ENCODE measurements at regions of chr10 and their contacts with region 1.

Region 1: DNA sequence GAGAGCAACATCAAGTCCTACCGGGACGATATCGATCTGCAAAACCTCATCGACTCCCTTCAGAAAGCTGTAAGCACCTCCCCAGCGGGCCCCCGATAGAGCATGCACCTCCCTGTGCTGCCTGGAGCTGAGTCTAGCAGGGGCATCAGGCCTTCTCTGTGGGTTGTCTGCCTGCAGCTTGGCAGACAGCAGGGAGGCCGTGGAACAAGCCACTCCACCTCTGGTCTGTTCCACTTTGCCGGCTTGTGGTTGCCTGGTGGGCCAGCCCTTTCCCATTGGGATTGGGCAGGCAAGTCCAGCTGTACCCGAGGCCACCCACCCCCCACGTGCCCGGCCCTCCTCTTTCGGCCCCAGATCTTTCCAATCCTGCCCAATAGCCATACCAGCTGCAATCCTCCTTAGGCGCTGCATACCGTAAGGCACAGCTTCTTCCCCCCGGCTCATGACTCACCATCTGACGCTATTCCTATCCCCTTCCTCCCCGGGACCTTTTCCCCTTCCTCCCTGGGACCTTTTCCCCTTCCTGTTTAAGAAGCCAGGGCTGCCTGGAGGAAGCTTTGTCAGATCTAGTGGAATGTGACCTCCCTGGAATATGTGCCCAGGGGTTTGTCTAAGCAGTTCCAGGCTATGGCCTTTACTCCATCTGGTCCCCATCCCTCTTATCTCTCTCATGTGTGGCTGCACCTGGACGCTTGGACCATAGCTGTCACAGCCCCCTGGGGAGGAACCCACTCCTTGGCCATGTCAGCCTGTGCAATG is 28.1 kb upstream of the SH2D4B start:
- DNase-seq: no peak
- H3K4me3 ChIP-seq: no peak overlapping the region
- H3K27ac ChIP-seq: peak overlapping the region in 1 of 4 donors; percentile 11
- H3K4me1 ChIP-seq: peaks cover 12 to 17% (median 14%) of the 10 kb centered on the region in 4 donors
- H3K27me3 ChIP-seq: no peaks in the 10 kb centered on the region
- CTCF ChIP-seq: no peak
- EP300 ChIP-seq: no peak
- POLR2A ChIP-seq: no peak

Region 2: DNA sequence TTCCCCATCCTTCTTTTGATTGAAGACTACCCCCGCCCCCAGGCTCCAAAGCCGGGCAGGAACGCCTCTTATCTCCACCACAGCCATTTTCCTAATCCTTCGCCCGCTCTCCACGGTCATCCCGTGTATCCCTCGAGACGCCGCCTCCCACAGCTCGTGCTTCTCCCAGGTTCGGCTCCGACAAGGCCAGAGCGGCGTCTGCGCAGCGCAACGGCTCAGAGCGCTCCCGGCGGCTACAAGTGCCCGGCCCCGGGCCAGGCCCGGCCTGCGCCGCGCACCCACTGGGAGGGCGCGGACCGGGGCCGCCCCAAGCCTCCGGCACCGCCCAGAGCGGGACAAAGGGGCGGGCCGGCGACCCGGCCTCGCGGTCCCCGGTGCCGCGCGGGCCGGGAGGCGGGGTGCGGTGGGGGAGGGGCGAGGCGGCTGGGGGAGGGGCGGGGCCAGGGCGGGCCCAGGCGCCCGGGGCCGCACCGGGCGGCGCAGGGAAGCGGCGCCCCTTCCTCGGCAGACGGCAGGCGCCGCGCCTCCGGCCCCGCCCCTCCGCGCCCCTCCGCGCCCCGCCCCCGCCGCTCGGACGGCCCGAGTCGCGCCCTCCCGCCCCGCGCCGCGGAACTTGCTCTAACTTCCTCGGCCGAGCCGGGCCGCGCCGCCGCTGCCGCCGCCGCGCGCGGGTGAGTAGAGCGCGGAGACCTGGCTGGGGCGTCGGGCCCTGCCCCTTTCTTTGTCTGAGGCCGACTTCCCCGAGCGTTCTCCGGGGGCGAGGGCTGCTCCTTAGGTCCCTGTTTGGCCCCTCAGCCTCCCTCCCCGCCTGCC is 55.7 kb before region 1 on chr10 and contains the start of gene TSPAN14:
- in situ Hi-C with region 1: loop called (anchors 5 to 10 kb)
- intact Hi-C with region 1: no loop called
- DNase-seq: peak; percentile 87
- H3K4me3 ChIP-seq: peak within 1 kb of the TSS; percentile 78 to 98 (median 82)
- H3K27ac ChIP-seq: peak within 1 kb of the TSS; percentile 97 to 100 (median 98)
- H3K4me1 ChIP-seq: peaks cover 18 to 46% (median 41%) of the 10 kb centered on the region in 4 donors
- H3K27me3 ChIP-seq: no peaks in the 10 kb centered on the region
- CTCF ChIP-seq: peak in 1 of 5 experiments; percentile 11
- EP300 ChIP-seq: no peak
- POLR2A ChIP-seq: peak; percentile 61
- total RNA-seq, gene TSPAN14: 18.9 to 72.9 (median 55.8) TPM